ENCODE measurements at regions of chr10 and their contacts with region 1.

Region 1: DNA sequence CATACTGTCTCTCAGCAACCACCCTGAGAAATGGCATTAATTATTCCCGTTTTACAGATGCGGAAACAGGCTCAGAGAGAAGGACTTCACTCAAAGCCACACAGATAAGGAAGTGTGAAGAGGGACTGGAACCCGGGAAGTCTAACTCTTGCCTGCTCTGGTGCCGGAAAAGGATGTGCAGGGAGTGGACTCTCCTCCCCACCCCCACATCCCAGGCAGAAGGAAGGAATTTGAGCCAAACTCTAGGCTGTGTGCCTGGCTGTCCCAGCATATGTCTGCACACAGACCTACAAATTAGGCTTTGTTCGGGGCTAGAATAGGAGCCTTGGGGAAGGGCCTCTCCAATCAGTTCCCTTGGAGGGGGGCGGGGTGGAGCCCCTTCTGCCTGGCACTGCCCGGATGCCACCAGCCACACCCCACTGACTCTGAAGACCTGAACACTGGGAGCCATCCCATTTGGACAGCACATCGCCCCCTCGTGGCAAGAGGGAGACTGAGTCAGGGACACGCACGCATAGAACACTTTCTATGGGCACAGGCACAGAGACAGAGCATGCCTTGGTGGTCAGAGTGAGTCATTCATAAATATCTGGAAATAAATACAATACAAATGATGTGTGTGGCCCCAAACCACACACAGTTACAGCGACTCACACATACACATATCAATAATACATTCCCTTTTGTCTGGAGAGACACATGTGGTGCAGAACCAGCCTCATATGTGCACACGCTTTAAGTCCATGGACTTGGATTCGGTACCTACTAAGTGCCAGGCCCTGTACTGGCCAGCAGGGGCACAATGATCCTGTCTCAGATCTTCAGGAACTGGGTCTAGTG is 13.1 kb downstream of the LZTS2 start:
- DNase-seq: peak; percentile 58
- H3K4me3 Mint-ChIP-seq: no peak overlapping the region
- H3K27ac Mint-ChIP-seq: peak overlapping the region; percentile 64
- H3K4me1 Mint-ChIP-seq: peaks cover 27% of the 10 kb centered on the region
- H3K27me3 Mint-ChIP-seq: peaks cover 26% of the 10 kb centered on the region

Region 2: DNA sequence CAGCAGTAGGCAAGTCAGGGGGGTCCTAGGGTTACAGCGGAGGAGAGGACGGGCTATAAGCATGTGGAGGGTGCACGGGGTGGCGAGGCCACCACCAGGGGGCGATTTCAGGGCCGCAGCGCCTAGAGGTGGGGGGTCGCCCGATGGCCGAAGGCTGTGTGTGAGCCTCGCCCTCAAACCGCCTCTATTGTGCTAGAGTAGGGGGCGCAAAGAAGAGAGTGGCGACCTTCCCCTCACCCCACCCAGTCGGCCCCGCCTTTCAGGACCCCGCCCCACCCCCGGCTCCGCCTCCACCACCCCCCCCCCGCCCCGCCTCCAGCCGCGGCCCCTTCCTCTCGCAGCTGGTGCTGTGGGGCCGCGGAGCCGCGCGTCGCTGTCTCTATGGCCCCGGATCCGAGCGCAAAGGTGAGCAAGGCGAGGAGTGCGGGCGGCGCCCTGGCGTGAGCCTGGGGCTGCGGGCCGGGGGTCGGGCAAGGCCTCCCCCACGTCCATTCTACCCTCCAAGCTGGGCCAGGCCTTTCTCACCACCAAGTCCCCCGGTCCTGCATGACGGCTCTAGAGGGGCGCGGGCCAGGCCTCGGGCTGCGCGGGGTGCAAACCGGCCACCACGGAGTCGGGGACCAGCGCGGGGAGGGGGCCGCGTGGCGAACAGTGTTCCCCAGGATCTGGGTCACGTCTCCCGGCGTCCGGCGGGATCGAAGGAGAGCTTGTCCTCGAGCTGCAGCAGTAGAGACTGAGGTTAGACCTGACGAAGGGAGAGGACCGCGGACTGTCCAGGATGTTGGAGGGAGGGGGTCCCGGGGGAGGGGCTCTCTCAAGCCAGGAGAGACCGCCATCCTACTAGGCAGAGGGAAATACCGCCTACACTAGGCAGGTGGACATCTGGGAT is 43.3 kb before region 1 on chr10 and contains the start of gene SEMA4G:
- intact Hi-C with region 1: loop called (anchors 1 kb)
- DNase-seq: peak; percentile 15
- H3K4me3 Mint-ChIP-seq: peak within 1 kb of the TSS; percentile 66
- H3K27ac Mint-ChIP-seq: no peak within 1 kb of the TSS
- H3K4me1 Mint-ChIP-seq: peaks cover 18% of the 10 kb centered on the region
- H3K27me3 Mint-ChIP-seq: peaks cover 11% of the 10 kb centered on the region
- total RNA-seq, gene SEMA4G: 0.31 and 0.83 TPM in 2 replicates

Region 3: DNA sequence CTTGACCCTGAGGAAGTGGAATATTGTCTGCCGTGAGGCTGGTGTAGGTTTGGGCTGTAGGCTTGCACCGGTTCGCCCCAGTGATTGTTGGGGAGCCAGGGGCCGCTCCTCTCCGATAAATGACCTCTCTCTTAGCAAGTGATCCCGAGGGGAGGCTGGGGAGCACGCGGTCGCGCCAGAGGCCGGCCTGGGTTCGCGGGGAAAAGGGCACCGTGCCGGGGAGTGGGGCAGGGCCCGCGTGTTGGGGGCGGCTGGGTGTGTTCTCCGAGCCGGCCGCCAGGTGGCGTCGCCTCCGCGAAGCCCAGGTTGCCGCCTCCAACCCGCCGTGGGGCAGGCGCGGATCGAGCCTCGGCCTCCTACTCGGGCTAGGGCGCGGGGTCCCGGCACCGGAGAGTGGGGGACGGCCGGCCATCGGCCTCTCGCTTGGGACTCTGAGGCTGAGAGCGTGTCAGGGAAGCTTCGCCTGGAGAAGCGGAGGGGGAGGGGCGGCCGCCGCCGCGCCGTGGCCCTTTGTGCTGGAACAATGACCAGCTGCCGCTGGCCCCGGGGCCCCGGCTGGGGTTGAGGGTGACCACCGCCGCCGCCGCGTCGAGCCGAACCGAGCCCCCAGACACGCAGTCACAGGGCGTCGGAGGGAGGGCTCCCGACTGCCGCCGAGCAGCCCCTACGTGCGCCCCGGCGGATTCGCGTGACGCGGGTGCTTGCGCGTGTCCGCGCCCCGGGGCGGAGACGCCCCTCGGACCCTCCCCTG is 13.6 kb before region 1 on chr10:
- intact Hi-C with region 1: loop called (anchors 1 kb)
- DNase-seq: peak; percentile 77
- H3K4me3 Mint-ChIP-seq: peak overlapping the region; percentile 88
- H3K27ac Mint-ChIP-seq: peak overlapping the region; percentile 93
- H3K4me1 Mint-ChIP-seq: peaks cover 29% of the 10 kb centered on the region
- H3K27me3 Mint-ChIP-seq: peaks cover 4% of the 10 kb centered on the region

Region 4: DNA sequence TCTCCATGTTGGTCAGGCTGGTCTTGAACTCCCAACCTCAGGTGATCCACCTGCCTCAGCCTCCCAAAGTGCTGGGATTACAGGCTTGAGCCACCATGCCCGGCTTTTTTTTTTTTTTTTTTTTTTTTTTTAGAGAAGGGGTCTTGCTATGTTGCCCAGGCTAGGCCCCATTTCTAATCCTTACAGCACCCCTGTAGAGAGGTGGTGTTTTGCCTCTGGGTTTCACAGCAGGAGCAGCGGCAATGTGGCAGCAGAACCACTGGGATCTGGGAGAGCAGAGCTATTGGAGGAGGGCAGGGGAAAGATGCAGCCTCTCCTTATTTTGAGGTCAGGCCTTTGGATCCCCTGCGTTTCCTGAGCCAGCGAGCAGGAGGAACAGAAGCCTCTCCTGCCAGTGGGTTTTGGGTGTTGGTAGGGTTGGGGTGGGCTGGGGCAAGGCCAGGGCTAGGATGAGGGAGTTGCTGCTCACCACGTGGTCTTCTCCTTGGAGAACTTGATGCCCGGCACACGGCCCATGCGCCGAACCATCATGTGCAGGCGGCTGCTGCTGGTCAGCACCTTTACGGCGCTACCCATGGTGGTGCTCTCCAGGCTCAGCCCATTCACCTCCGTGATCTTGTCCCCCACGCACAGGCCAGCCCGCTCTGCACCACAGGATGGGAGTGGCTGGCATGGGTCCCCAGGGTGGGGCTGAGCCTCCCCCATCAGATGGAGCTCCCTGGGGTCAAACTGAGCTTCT is 10.4 kb after region 1 on chr10:
- intact Hi-C with region 1: no loop called
- DNase-seq: no peak
- H3K4me3 Mint-ChIP-seq: no peak overlapping the region
- H3K27ac Mint-ChIP-seq: no peak overlapping the region
- H3K4me1 Mint-ChIP-seq: no peaks in the 10 kb centered on the region
- H3K27me3 Mint-ChIP-seq: peaks cover 23% of the 10 kb centered on the region

Region 5: GRCh38 chr10:101067356-101068083 is 54.8 kb after region 1 on chr10:
- intact Hi-C with region 1: no loop called
- DNase-seq: peak; percentile 68
- H3K4me3 Mint-ChIP-seq: peak overlapping the region; percentile 82
- H3K27ac Mint-ChIP-seq: no peak overlapping the region
- H3K4me1 Mint-ChIP-seq: peaks cover 7% of the 10 kb centered on the region
- H3K27me3 Mint-ChIP-seq: peaks cover 45% of the 10 kb centered on the region